Activated CD4-positive, alpha-beta T cell treated with anti-CD3 and anti-CD28 coated beads, Interleukin-2, amount 10 ng/mL, durations not matched to agents 7 days and 5 days (primary cell): ENCODE measurements at regions of chr3 and their contacts with region 1.

Region 1: GRCh38 chr3:50611464-50612233 is at the start of gene CISH:
- DNase-seq: peak; percentile 98
- H3K4me3 Mint-ChIP-seq: peak within 1 kb of the TSS; percentile 99
- H3K27ac Mint-ChIP-seq: peak within 1 kb of the TSS; percentile 98
- H3K4me1 Mint-ChIP-seq: peaks cover 33% of the 10 kb centered on the region
- H3K27me3 Mint-ChIP-seq: no peaks in the 10 kb centered on the region
- total RNA-seq, gene CISH: 300 to 308 TPM

Region 2: DNA sequence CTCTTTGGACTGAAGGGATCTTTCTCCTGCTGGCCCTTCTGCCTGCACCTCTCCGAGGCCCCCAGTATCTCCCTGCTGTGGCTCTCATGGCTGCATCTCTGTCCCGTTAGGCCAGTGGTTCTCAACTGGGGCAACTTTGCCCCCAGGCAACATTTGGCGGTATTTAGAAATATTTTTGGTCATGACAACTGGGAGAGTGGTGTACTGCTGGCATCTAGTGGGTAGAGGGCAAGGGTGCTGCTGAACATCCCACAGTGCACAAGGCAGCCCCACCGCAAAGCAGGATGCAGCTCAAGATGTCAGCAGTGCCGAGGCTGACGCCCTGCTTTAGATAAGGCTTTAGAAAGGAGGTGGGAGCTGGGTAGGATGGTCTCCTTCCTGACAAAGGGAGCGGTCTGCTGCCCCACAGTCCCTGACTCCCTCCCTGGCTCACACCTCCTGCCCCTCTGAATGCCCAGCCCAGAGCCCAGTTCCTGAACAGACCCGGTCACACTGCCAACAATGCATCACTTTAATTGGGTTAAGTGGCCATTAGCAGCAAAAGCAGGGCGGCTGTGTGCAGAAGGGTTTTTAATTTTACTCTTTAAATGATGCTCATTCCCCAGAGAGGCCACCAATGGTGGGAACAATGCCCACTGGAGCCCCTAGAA is 183.5 kb before region 1 on chr3:
- CTCF ChIA-PET with region 1: no interaction called
- POLR2A ChIA-PET with region 1: no interaction called
- DNase-seq: peak; percentile 11
- H3K4me3 Mint-ChIP-seq: no peak overlapping the region
- H3K27ac Mint-ChIP-seq: no peak overlapping the region
- H3K4me1 Mint-ChIP-seq: no peaks in the 10 kb centered on the region
- H3K27me3 Mint-ChIP-seq: no peaks in the 10 kb centered on the region

Region 3: GRCh38 chr3:50568947-50569749 is 42.5 kb before region 1 on chr3 and contains the start of gene HEMK1:
- CTCF ChIA-PET with region 1: interaction called, 274 read pairs
- POLR2A ChIA-PET with region 1: interaction called, 168 read pairs
- DNase-seq: peak; percentile 96
- H3K4me3 Mint-ChIP-seq: peak within 1 kb of the TSS; percentile 95
- H3K27ac Mint-ChIP-seq: peak within 1 kb of the TSS; percentile 94
- H3K4me1 Mint-ChIP-seq: peaks cover 72% of the 10 kb centered on the region
- H3K27me3 Mint-ChIP-seq: no peaks in the 10 kb centered on the region
- total RNA-seq, gene HEMK1: 42.3 to 49.0 TPM

Region 4: GRCh38 chr3:50587806-50588758 is 23.6 kb before region 1 on chr3:
- CTCF ChIA-PET with region 1: interaction called, 211 read pairs
- POLR2A ChIA-PET with region 1: interaction called, 76 read pairs
- DNase-seq: peak; percentile 71
- H3K4me3 Mint-ChIP-seq: peak overlapping the region; percentile 45
- H3K27ac Mint-ChIP-seq: peak overlapping the region; percentile 96
- H3K4me1 Mint-ChIP-seq: peaks cover 89% of the 10 kb centered on the region
- H3K27me3 Mint-ChIP-seq: no peaks in the 10 kb centered on the region

Region 5: GRCh38 chr3:50627407-50628051 is 15.9 kb after region 1 on chr3:
- CTCF ChIA-PET with region 1: interaction called, 14 read pairs
- POLR2A ChIA-PET with region 1: no interaction called
- DNase-seq: no peak
- H3K4me3 Mint-ChIP-seq: no peak overlapping the region
- H3K27ac Mint-ChIP-seq: peak overlapping the region; percentile 9
- H3K4me1 Mint-ChIP-seq: peaks cover 97% of the 10 kb centered on the region
- H3K27me3 Mint-ChIP-seq: no peaks in the 10 kb centered on the region

Region 6: DNA sequence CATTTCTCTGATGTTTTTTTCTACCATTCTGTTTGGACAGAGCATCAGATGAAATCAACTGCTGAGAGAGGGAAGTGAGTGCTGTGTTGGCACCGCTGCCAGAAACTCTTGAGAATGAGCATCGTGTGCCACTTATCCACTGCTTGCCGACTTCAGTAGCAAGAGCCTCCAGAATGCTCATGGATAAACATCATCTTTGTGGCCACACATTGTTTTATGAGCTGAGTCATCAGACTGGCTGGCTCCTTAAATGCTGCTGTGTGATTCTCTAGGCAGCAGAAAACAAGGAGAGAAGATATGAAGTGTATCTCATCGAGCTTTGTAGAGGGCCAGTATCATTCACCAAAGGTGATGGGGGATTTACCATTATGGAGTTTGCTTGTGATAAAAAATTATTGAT is 59.7 kb after region 1 on chr3:
- CTCF ChIA-PET with region 1: interaction called, 10 read pairs
- POLR2A ChIA-PET with region 1: no interaction called
- DNase-seq: no peak
- H3K4me3 Mint-ChIP-seq: no peak overlapping the region
- H3K27ac Mint-ChIP-seq: no peak overlapping the region
- H3K4me1 Mint-ChIP-seq: peaks cover 10% of the 10 kb centered on the region
- H3K27me3 Mint-ChIP-seq: peaks cover 48% of the 10 kb centered on the region

Region 7: GRCh38 chr3:51391075-51391567 is 779.5 kb after region 1 on chr3 and contains the start of gene RBM15B:
- CTCF ChIA-PET with region 1: interaction called, 14 read pairs
- POLR2A ChIA-PET with region 1: no interaction called
- DNase-seq: peak; percentile 97
- H3K4me3 Mint-ChIP-seq: peak within 1 kb of the TSS; percentile 83
- H3K27ac Mint-ChIP-seq: peak within 1 kb of the TSS; percentile 93
- H3K4me1 Mint-ChIP-seq: peaks cover 78% of the 10 kb centered on the region
- H3K27me3 Mint-ChIP-seq: no peaks in the 10 kb centered on the region
- total RNA-seq, gene RBM15B: 29.0 to 29.8 TPM